ENCODE measurements at regions of chr2 and their contacts with region 1.

Region 1: GRCh38 chr2:200703127-200703925 is 108.4 kb upstream of the BZW1 start:
- DNase-seq: no peak
- H3K4me3 ChIP-seq: no peak overlapping the region
- H3K27ac ChIP-seq: no peak overlapping the region
- H3K4me1 ChIP-seq: peaks cover 0 to 6% (median 2%) of the 10 kb centered on the region in 4 experiments; a peak in 2 of 7 replicates
- H3K27me3 ChIP-seq: no peaks in the 10 kb centered on the region
- CTCF ChIP-seq: peak in 1 of 3 experiments; percentile 50; a peak in 1 of 4 replicates
- EP300 ChIP-seq: no peak
- POLR2A ChIP-seq: no peak
- RAD21 ChIP-seq: peak; percentile 73 to 81

Region 2: DNA sequence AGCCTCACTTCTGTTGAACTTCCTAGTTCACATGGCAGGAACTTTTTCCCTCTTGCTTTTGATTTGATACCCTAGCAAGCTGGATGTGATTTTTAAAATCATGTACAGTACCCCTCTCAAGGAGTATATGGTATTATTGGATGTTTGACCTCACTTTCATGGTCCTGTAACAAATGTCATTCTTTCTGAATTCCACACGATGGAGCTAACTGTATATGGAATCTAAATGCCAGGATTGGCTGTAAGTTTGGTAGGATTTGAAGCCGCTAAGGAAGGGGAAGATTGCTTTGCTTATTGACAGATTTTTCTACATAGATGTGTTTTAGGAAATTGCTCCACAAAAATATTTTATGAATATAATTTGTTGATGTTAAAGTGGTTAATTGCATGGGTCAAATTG is 729.6 kb before region 1 on chr2:
- CTCF ChIA-PET with region 1: interaction called, 10 read pairs
- POLR2A ChIA-PET with region 1: interaction called, 4 read pairs
- DNase-seq: no peak
- H3K4me3 ChIP-seq: no peak overlapping the region
- H3K27ac ChIP-seq: no peak overlapping the region
- H3K4me1 ChIP-seq: no peaks in the 10 kb centered on the region
- H3K27me3 ChIP-seq: no peaks in the 10 kb centered on the region
- CTCF ChIP-seq: peak in 2 of 3 experiments; percentile 49 to 66; a peak in 2 of 4 replicates
- EP300 ChIP-seq: no peak
- POLR2A ChIP-seq: no peak
- RAD21 ChIP-seq: peak; percentile 94

Region 3: DNA sequence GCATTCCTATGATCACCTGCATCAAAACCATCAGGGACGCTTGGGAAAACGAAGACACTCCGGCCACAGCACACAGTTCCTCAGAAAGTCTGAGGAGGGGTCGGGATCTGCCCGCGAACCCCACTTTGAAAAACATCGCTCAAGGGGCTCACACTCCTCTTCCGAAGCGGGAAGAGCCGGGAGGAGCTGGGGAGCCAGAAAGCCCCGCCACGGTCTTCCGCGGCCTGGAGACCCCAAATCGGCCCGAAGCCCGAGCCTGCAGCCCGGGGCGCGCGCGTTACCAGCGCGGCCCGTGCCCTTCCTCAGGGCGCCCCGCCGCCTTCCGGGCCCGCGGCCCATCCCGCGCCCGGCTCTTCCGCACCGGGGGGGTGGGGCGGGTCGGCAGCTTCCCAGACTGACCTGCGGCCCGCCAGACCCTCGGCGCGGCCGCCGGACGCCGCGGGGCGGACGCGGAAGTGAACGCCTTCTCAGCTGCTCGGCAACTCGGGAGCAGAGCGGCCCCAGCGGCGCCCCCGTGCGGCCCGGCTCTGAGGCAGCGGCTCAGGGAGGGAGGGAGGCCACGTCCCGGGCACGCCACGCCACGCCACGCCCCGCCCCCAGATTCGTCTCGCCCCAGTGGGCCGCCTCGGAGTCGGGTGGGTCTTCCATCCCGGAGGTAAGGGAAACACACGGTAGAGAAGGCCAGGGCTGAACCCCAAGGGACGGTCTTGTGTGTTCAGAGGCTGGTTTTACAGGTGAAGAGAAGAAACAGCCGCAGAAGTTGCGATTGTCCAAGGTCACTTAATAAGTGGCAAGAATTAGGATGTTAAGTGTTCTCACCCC is 193.5 kb before region 1 on chr2 and contains the start of gene KCTD18:
- CTCF ChIA-PET with region 1: no interaction called
- POLR2A ChIA-PET with region 1: no interaction called
- DNase-seq: peak; percentile 56 to 92
- H3K4me3 ChIP-seq: peak within 1 kb of the TSS; percentile 56 to 84 (median 73)
- H3K27ac ChIP-seq: no peak within 1 kb of the TSS
- H3K4me1 ChIP-seq: peaks cover 0 to 3% (median under 1%) of the 10 kb centered on the region in 4 experiments; a peak in 2 of 7 replicates
- H3K27me3 ChIP-seq: no peaks in the 10 kb centered on the region; a peak in 1 of 7 replicates
- CTCF ChIP-seq: peak; percentile 74 to 83 (median 75)
- EP300 ChIP-seq: peak in 1 of 2 experiments; percentile 19; a peak in 2 of 3 replicates
- POLR2A ChIP-seq: peak; percentile 33 to 63
- RAD21 ChIP-seq: peak; percentile 50 to 64; a peak in 3 of 4 replicates
- total RNA-seq, gene KCTD18: 3.1 and 3.3 TPM in 2 replicates

Region 4: GRCh38 chr2:200585730-200586643 is 117.3 kb before region 1 on chr2 and contains the start of gene AOX1:
- CTCF ChIA-PET with region 1: interaction called, 25 read pairs
- POLR2A ChIA-PET with region 1: interaction called, 3 read pairs
- DNase-seq: peak; percentile 68 to 87
- H3K4me3 ChIP-seq: peak within 1 kb of the TSS; percentile 60 to 77 (median 74)
- H3K27ac ChIP-seq: no peak within 1 kb of the TSS; the same call in 1 of the 2 replicates
- H3K4me1 ChIP-seq: peaks cover 0 to 6% (median 1%) of the 10 kb centered on the region in 4 experiments; a peak in 1 of 7 replicates
- H3K27me3 ChIP-seq: peaks cover 0 to 13% (median 8%) of the 10 kb centered on the region in 4 experiments; a peak in 5 of 7 replicates
- CTCF ChIP-seq: peak in 2 of 3 experiments; percentile 14 to 20; a peak in 2 of 4 replicates
- EP300 ChIP-seq: no peak
- POLR2A ChIP-seq: peak; percentile 68 to 71
- RAD21 ChIP-seq: peak; percentile 6 to 8; a peak in 2 of 4 replicates
- total RNA-seq, gene AOX1: 4.9 and 5.6 TPM in 2 replicates

Region 5: DNA sequence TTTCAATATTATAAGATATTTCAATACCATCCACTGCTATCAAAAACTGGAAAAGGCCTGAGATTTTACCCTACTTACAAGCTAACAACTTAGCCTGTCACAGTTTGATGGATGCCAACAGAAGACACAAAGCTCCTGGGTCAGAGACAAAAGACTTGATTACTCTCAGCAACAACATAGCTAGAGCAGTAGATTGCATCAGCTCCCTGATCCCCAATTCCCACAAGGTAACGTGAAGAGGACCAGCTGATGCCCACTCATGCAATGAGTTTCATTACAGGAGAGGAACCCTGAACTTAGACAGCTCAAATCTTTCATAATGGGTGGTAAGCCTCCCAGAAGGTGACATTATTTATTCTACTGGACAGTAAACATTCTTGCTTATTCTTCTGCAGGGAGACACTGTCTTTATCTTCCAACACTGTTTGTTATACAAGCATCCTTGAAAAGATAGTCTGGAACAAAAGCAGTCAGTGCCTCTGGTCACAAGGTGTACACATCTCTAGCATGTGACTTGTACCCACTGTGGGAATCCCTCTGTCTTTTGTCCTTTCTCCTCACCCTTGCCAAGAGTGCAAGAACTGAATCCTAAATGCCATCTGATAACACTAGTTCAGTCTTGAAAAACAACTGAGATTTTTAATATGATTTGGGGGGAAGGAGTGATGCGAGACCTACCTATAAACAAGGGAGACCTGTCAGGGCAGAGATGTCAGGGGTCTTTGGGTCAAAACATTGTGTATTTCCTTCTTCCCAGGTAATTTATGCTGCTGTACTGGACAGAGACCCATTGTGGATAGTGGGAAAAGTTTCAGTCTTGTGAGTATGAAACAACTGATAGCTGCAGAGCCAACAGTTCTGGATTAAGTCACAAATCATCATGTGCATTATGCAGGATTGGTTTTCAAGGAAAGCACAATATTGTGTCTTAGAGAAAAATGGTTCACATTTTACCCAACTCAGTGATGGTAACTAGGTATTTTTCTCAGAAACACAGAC is 15.1 kb before region 1 on chr2:
- CTCF ChIA-PET with region 1: no interaction called
- POLR2A ChIA-PET with region 1: no interaction called
- DNase-seq: no peak
- H3K4me3 ChIP-seq: no peak overlapping the region
- H3K27ac ChIP-seq: no peak overlapping the region
- H3K4me1 ChIP-seq: no peaks in the 10 kb centered on the region
- H3K27me3 ChIP-seq: no peaks in the 10 kb centered on the region
- CTCF ChIP-seq: no peak
- EP300 ChIP-seq: no peak
- POLR2A ChIP-seq: no peak
- RAD21 ChIP-seq: no peak

Region 6: DNA sequence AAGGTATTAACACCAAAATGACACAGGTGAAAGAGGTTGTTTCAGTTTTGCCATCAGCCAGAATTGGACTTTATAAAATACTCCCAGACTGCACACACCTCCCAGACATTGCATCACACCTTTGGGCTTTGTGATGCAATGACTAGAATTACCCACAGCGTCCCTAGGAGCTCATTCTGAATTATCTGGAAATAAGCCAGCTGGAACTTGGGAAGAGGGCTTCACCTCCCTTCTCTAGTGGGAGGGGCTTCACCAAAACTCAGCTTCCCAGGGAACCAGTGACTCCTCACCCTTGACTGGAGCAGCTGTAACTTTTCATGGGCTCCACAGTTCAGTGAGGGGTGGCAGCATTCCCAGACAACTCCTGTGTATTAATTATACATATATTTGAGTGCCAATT is 25.3 kb after region 1 on chr2:
- CTCF ChIA-PET with region 1: interaction called, 11 read pairs
- POLR2A ChIA-PET with region 1: interaction called, 3 read pairs
- DNase-seq: no peak
- H3K4me3 ChIP-seq: no peak overlapping the region
- H3K27ac ChIP-seq: no peak overlapping the region
- H3K4me1 ChIP-seq: peaks cover 0 to 10% (median 5%) of the 10 kb centered on the region in 4 experiments; a peak in 4 of 7 replicates
- H3K27me3 ChIP-seq: 0 out of 7 replicates have a peak, but pooled peaks cover 0 to 2% (median 0%) of the 10 kb centered on the region in 4 experiments
- CTCF ChIP-seq: no peak
- EP300 ChIP-seq: no peak
- POLR2A ChIP-seq: no peak
- RAD21 ChIP-seq: no peak

Region 7: DNA sequence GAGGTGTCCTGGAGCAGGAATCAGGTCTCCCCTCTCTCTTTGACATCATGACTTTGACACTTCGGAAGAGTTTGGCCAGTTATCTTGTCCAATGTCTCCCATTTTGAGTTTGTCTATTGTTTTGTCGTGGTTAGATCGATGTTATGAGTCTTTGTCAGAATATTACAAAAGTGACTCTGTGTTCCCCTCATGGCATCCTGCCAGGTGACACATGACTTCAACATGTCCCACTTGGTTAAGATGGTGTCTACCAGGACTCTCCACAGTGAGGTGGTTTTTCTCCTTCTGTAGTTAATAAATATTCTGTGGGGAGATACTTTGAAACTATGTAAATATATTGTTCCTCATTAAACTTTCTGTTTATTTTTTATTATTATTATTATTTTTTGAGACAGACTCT is 31.7 kb after region 1 on chr2:
- CTCF ChIA-PET with region 1: interaction called, 54 read pairs
- POLR2A ChIA-PET with region 1: interaction called, 3 read pairs
- DNase-seq: no peak
- H3K4me3 ChIP-seq: no peak overlapping the region
- H3K27ac ChIP-seq: no peak overlapping the region
- H3K4me1 ChIP-seq: peaks cover 5 to 22% (median 19%) of the 10 kb centered on the region in 4 experiments; a peak in 5 of 7 replicates
- H3K27me3 ChIP-seq: no peaks in the 10 kb centered on the region
- CTCF ChIP-seq: no peak
- EP300 ChIP-seq: no peak
- POLR2A ChIP-seq: no peak
- RAD21 ChIP-seq: no peak